SK-N-SH (cell line): ENCODE measurements at regions of chr14 and their contacts with region 1.

Region 1: GRCh38 chr14:96275177-96276112 is 19.4 kb downstream of the BDKRB1 start:
- DNase-seq: peak; percentile 78
- H3K4me3 ChIP-seq: peak overlapping the region in 1 of 2 experiments; percentile 14; a peak in 1 of 4 replicates
- H3K27ac ChIP-seq: peak overlapping the region; percentile 67 to 68
- H3K4me1 ChIP-seq: peaks cover 18 to 30% of the 10 kb centered on the region in 2 experiments
- H3K27me3 ChIP-seq: no peaks in the 10 kb centered on the region
- CTCF ChIP-seq: peak; percentile 98
- EP300 ChIP-seq: no peak
- RAD21 ChIP-seq: peak; percentile 96

Region 2: DNA sequence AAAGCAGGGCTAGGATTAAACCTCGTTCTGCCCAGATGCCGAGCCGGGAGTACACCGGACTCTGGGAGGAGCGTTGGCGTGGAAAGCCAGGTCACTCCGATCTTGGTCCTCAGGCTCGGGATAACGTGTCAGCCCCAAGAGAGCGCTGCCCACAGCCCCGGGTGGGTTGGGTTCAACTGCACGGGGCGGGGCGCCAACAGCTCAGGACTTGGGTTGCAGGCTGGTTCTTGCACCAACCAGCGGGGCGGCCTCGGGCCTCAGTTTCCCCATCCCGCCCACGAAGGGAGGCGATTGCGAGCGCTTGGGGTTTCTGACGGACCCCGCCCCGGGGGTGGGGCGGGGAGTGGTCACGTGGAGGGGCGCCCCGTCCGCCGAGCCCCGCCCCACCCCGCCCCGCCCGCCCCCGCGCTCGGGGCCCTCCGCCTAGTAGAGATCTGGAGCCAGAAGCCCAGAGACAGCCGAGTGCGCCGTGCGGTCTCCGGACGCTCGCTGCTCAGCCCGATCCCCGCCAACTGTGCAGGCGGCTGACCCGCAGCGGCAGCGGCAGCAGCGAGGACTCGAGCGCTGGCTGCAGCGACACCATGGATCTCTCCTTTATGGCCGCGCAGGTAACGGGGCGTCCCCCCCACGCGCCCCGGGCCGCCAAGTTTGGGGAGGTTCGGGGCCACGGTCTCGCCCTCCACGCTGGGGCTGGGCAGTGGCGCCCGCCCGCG is 236.4 kb before region 1 on chr14 and contains the start of gene C14orf132:
- CTCF ChIA-PET with region 1: interaction called, 12 read pairs
- POLR2A ChIA-PET with region 1: no interaction called
- DNase-seq: peak; percentile 96
- H3K4me3 ChIP-seq: peak within 1 kb of the TSS; percentile 81 to 92
- H3K27ac ChIP-seq: peak within 1 kb of the TSS; percentile 45 to 90
- H3K4me1 ChIP-seq: peaks cover 7 to 32% of the 10 kb centered on the region in 2 experiments
- H3K27me3 ChIP-seq: no peaks in the 10 kb centered on the region
- CTCF ChIP-seq: no peak
- EP300 ChIP-seq: no peak
- RAD21 ChIP-seq: no peak
- polyA plus RNA-seq, gene C14orf132: 5.5 and 7.1 TPM in 2 replicates

Region 3: GRCh38 chr14:96160076-96160912 is 115.2 kb before region 1 on chr14:
- CTCF ChIA-PET with region 1: interaction called, 13 read pairs
- POLR2A ChIA-PET with region 1: no interaction called
- DNase-seq: no peak
- H3K4me3 ChIP-seq: no peak overlapping the region
- H3K27ac ChIP-seq: no peak overlapping the region
- H3K4me1 ChIP-seq: peaks cover 4 to 11% of the 10 kb centered on the region in 2 experiments; a peak in 2 of 4 replicates
- H3K27me3 ChIP-seq: no peaks in the 10 kb centered on the region
- CTCF ChIP-seq: no peak
- EP300 ChIP-seq: no peak
- RAD21 ChIP-seq: no peak

Region 4: DNA sequence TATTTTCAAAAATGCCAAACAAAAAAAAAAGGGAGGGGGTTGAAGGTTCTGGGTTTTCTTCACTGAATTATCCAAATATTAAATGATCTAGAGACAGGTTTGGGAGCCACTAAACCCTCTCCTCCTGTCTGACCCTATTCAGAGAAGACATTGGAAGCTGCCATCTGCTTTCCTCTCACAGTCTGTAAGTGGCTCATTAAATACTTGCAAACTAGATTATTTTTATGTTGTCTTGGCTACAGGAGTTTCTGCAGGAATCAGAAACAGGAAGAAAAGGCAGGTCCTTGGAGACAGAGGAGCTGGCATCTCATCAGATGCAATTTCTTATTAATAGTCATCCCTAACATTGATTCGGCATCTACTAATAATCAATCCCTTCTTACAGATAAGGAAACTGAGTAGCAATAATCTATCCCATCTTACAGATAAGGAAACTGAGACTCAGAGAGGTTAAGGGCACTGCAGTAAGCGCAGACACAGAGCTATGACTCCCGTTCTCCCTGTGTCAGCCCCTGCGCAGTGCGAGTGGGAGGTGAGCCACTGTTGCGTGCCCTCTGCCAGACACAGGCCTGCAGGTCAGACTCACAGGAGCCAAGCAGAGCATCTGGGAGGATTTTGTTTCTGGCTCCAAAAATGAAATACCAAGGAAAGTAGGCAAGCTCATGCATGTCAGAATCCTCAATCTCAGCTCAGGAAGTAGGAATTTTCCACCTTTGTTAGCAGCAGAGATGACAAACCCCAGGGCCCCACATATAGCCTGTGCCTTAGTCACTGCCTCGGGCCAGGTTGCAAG is 59.8 kb before region 1 on chr14:
- CTCF ChIA-PET with region 1: interaction called, 19 read pairs
- POLR2A ChIA-PET with region 1: interaction called, 3 read pairs
- DNase-seq: no peak
- H3K4me3 ChIP-seq: no peak overlapping the region
- H3K27ac ChIP-seq: peak overlapping the region in 1 of 2 experiments; percentile 51; a peak in 2 of 4 replicates
- H3K4me1 ChIP-seq: peaks cover 0 to 20% of the 10 kb centered on the region in 2 experiments; a peak in 1 of 4 replicates
- H3K27me3 ChIP-seq: no peaks in the 10 kb centered on the region
- CTCF ChIP-seq: no peak
- EP300 ChIP-seq: no peak
- RAD21 ChIP-seq: no peak

Region 5: DNA sequence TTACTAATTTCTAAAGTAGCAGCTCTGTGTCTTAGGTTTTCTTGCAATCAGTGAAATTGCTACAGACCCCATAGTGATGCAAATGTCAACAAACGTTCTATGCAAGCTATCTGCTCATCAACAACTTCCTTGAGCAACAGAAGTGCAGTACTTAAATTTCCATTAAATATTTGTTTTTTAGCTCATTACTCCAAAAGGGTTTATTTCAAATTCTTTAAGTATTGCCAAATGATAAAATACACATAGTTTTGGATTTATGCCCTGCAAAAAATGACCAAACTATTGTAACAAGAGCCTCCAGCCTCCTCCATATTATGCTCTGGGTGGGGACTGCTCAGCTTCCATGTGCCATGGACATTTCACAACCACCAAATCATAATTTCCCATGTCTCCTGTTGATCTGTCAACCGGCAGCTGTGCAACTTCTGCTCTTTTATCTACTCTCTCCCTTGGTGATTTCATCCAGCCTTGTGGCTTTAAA is 15.1 kb before region 1 on chr14:
- CTCF ChIA-PET with region 1: interaction called, 27 read pairs
- POLR2A ChIA-PET with region 1: no interaction called
- DNase-seq: no peak
- H3K4me3 ChIP-seq: no peak overlapping the region
- H3K27ac ChIP-seq: no peak overlapping the region
- H3K4me1 ChIP-seq: peaks cover 5 to 9% of the 10 kb centered on the region in 2 experiments
- H3K27me3 ChIP-seq: no peaks in the 10 kb centered on the region
- CTCF ChIP-seq: no peak
- EP300 ChIP-seq: no peak
- RAD21 ChIP-seq: no peak

Region 6: DNA sequence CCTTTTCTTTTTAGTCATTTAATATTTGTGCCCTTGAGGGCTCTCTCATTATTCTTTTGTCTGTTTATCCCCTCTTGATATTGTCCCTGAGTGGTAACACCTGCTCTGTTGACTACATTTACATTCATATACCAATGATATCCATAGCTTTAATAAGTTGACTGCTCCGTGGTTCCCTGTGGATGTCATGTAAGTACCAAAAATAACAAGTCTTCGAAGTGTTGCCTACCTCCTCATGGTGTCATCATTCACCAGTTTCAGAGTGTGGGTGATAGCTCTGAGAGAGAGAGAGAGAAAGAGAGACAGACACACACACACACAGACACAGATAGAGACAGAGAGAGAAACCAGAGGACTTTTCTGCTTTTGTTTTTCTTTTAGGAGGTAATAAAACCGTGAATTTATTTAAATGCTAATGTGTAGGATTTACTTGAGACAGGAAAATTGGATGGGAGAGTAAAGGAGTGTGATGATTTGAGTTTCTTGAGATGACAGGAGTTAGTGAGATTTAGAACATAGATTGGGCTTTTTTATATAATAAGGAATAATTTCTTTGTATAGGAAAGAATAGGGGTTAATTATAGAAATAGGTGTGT is 279.0 kb after region 1 on chr14:
- CTCF ChIA-PET with region 1: no interaction called
- POLR2A ChIA-PET with region 1: no interaction called
- DNase-seq: no peak
- H3K4me3 ChIP-seq: no peak overlapping the region
- H3K27ac ChIP-seq: no peak overlapping the region
- H3K4me1 ChIP-seq: no peaks in the 10 kb centered on the region
- H3K27me3 ChIP-seq: no peaks in the 10 kb centered on the region
- CTCF ChIP-seq: no peak
- EP300 ChIP-seq: no peak
- RAD21 ChIP-seq: no peak